Sigmoid colon (tissue), 7 donors: ENCODE measurements at regions of chr20 and their contacts with region 1.

Region 1: GRCh38 chr20:51595058-51595532 is 52.6 kb upstream of the NFATC2 start:
- DNase-seq: peak; percentile 96
- H3K4me3 ChIP-seq: no peak overlapping the region
- H3K27ac ChIP-seq: peak overlapping the region; percentile 28 to 38 (median 30)
- H3K4me1 ChIP-seq: peaks cover 0 to 13% (median 6%) of the 10 kb centered on the region in 4 donors
- H3K27me3 ChIP-seq: no peaks in the 10 kb centered on the region
- CTCF ChIP-seq: peak; percentile 74 to 90 (median 86)
- EP300 ChIP-seq: no peak
- POLR2A ChIP-seq: no peak

Region 2: GRCh38 chr20:50987592-50988210 is 607.4 kb before region 1 on chr20:
- intact Hi-C with region 1: loop called (anchors 5 kb)
- DNase-seq: peak; percentile 83
- H3K4me3 ChIP-seq: no peak overlapping the region
- H3K27ac ChIP-seq: no peak overlapping the region
- H3K4me1 ChIP-seq: no peaks in the 10 kb centered on the region
- H3K27me3 ChIP-seq: peaks cover 0 to 37% (median 16%) of the 10 kb centered on the region in 3 donors
- CTCF ChIP-seq: peak; percentile 78 to 93 (median 88)
- EP300 ChIP-seq: no peak
- POLR2A ChIP-seq: no peak

Region 3: DNA sequence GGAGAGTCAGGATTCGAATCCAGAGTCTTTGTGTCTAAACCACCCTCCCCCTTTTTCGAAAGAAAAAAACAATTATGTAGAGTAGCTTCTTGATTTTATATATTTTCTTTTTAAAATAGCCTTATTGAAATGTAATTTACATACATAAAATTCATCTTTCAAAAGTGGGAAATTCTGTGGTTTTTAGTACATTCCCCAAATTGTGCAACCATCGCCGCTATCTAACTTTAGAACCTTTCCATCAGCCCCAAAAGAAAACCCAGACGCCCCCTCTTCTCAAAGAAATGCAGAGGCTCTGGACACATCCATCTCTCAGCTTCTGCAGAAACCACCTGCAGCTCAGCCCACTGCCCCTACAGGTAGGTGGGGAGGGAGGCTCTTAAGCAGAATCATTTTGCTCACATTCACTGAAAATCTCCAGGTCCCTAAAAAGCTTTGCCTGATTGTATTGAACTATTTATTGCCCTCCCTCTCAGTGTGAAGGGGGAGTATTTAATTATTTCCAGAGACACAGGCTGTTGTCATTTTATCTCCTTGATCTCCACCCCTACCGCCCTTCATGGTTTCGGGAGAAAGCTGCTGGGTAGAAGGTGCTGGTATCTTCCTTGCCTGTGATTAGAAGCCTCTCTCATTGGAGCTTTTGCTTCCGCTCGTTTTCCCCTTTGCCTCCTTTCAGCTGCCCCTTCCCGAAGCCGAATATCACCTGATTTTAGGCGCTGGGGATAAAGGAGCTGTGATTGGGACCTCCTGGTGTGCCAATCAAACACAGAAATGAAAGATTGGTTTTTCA is 503.5 kb before region 1 on chr20:
- intact Hi-C with region 1: no loop called
- DNase-seq: no peak
- H3K4me3 ChIP-seq: no peak overlapping the region
- H3K27ac ChIP-seq: no peak overlapping the region
- H3K4me1 ChIP-seq: no peaks in the 10 kb centered on the region
- H3K27me3 ChIP-seq: peaks cover 0 to 51% (median 0%) of the 10 kb centered on the region in 3 donors
- CTCF ChIP-seq: no peak
- EP300 ChIP-seq: no peak
- POLR2A ChIP-seq: no peak

Region 4: DNA sequence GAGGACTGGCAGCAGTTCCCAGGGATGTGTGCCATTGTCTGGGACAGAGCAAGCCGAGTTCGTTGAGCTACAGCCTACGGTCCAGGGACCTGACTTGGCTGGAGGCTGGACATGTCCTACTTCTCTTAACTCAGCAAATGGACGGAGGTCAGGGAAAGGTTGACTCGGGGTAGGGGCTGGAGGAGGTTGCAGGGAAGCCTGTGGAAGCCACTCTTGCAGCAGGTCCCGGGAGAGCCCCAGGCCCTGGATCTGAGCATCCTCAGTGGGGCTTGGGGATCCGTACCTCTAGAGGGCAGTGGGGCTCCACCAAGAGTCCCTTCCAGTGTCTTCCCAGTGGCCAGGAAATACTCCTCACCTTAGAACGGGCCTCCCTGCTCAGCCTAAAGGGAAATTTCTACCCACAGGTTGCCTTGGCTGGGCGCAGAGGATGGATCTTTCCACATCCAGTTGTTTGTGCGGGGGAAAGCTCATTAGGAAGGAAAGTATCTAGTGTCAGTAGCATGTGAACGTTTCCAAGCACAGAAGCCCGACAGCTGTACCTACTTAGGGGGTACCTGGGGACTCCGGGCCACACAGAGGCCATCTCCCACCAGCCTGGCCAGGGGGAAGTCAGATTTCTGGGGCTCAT is 222.8 kb before region 1 on chr20:
- intact Hi-C with region 1: loop called (anchors 1 kb)
- DNase-seq: peak; percentile 81
- H3K4me3 ChIP-seq: no peak overlapping the region
- H3K27ac ChIP-seq: no peak overlapping the region
- H3K4me1 ChIP-seq: peaks cover 0 to 3% (median 0%) of the 10 kb centered on the region in 4 donors
- H3K27me3 ChIP-seq: no peaks in the 10 kb centered on the region
- CTCF ChIP-seq: peak; percentile 66 to 76 (median 70)
- EP300 ChIP-seq: no peak
- POLR2A ChIP-seq: no peak

Region 5: GRCh38 chr20:51562332-51563155 is 32.6 kb before region 1 on chr20:
- intact Hi-C with region 1: loop called (anchors 2 kb)
- DNase-seq: peak; percentile 94
- H3K4me3 ChIP-seq: peak overlapping the region; percentile 20 to 57 (median 49)
- H3K27ac ChIP-seq: peak overlapping the region; percentile 83 to 92 (median 86)
- H3K4me1 ChIP-seq: peaks cover 0 to 57% (median 49%) of the 10 kb centered on the region in 4 donors
- H3K27me3 ChIP-seq: no peaks in the 10 kb centered on the region
- CTCF ChIP-seq: no peak
- EP300 ChIP-seq: no peak
- POLR2A ChIP-seq: peak; percentile 17 to 33